Ascending aorta (tissue), 2 donors: ENCODE measurements at regions of chr1 and their contacts with region 1.

Region 1: GRCh38 chr1:151059078-151059907 is at the start of gene CDC42SE1:
- DNase-seq: peak in 1 of 2 donors; percentile 92
- H3K4me3 ChIP-seq: peak within 1 kb of the TSS; percentile 83 to 93
- H3K27ac ChIP-seq: peak within 1 kb of the TSS; percentile 96
- H3K4me1 ChIP-seq: peaks cover 0 to 37% of the 10 kb centered on the region in 2 donors
- H3K27me3 ChIP-seq: no peaks in the 10 kb centered on the region
- CTCF ChIP-seq: peak; percentile 75 to 96 (median 89)
- total RNA-seq, gene CDC42SE1: 42.4 TPM

Region 2: DNA sequence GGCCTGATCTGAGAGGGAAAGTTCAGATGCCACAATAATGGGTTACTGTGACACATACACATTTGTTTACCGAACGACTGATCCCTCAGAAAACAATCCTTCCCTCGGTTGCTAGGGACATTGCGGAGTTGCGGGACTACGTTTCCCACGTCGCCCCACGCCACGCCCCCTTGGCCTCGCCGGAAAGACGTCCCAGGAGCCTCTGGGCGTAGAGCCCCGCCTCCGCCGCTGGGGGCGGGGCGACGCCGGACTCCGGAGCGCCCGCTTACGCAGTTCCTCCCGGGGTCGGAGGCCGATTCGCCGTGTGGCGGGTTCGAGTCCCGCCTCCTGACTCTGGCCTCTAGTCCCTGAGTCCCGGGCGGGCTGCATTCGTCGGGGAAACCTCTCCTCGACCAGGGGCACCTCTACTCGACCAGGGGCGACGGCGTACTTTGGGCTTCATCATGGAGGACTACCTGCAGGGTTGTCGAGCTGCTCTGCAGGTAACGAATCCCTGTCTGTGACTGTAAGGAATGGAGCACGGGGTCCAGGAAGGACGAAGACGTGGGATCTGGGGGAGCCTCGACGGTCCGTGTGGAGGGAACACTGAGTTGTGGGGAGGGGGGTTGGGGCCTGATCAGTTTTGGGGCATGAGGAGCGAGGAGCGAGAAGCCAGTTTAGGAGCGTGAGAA is 51.0 kb before region 1 on chr1 and contains the start of gene PRUNE1:
- intact Hi-C with region 1: loop called (anchors 2 kb)
- DNase-seq: peak; percentile 84 to 97
- H3K4me3 ChIP-seq: peak within 1 kb of the TSS; percentile 70 to 71
- H3K27ac ChIP-seq: peak within 1 kb of the TSS; percentile 85 to 87
- H3K4me1 ChIP-seq: peaks cover 11 to 48% of the 10 kb centered on the region in 2 donors
- H3K27me3 ChIP-seq: no peaks in the 10 kb centered on the region
- CTCF ChIP-seq: no peak
- total RNA-seq, gene PRUNE1: 36.5 TPM

Region 3: DNA sequence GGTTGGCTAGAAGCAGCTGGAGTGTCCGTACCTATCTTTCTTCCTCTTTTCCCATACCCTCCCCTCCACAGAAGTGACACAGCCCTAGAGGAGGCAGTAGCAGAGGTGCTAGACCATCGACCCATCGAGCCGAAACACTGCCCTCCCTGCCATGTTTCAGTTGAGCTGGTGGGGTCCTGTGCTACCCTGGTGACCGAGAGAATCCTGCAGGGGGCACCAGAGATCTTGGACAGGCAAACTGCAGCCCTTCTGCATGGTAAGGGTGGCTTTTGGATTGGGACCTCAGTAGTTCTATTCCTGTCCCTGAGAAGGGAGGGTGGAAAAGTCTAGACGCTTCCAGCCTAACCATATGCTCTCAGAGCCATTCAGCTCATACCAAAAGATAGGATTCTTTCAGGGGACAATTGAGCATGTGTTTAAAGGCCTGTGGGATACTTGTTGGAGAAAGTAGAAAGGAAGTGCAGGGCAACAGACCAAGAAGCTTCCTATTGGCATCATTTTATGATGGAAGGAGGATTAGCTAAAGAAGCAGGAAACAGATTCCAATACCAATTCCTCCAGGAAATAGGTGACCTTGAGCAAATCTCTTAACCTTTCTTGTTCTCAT is 34.6 kb before region 1 on chr1:
- intact Hi-C with region 1: loop called (anchors 1 kb)
- DNase-seq: peak in 1 of 2 donors; percentile 92
- H3K4me3 ChIP-seq: no peak overlapping the region
- H3K27ac ChIP-seq: peak overlapping the region; percentile 27 to 28
- H3K4me1 ChIP-seq: no peaks in the 10 kb centered on the region
- H3K27me3 ChIP-seq: no peaks in the 10 kb centered on the region
- CTCF ChIP-seq: peak; percentile 64 to 83 (median 80)

Region 4: GRCh38 chr1:151222130-151222529 is 162.8 kb after region 1 on chr1:
- intact Hi-C with region 1: no loop called
- DNase-seq: no peak
- H3K4me3 ChIP-seq: no peak overlapping the region
- H3K27ac ChIP-seq: no peak overlapping the region
- H3K4me1 ChIP-seq: no peaks in the 10 kb centered on the region
- H3K27me3 ChIP-seq: no peaks in the 10 kb centered on the region
- CTCF ChIP-seq: no peak